Activated B cell treated with CpG ODN at 0.5 μM for 24 hours (primary cell): ENCODE measurements at regions of chr7 and their contacts with region 1.

Region 1: DNA sequence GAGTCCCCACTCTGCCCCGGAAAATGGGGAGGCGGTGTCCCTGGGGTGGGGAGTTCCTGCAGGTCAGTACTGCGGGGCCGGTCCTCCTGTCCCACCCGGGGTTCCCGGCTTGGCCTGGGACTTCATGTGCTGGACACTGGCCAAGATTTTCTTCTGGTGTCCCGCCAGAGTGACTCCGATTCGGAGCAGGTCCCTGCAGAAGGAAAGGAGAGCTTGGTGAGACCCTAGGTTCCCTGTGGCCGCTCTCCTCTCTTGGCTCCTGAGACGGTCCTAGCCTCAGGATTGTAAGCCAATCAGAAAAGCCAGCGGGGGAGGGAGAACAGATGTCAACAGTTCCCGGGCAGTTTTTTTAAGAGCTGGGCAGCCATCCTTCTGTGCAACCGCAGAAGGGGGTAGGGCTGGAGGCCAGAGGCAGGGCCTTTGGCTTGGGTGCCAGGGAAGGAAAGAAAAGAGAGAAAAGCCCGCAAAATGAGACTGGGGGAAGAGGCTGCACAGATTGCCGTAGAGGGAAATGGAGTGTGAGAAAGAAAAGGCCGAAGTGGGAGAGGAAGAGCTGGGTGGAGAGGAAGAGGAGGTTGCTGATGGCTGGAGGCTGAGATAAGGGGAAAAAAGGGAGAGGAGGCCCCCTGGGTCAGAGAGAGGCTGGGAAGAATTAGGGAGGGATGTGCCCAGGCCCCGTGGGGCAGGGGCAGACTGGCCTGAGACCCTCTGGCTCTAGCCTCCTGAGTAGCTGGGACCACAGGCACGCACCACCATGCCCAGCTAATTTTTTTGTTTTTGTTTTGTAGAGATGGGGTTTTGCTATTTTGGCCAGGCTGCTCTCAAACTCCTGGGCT is 23.7 kb downstream of the EPHB4 start:
- DNase-seq: peak; percentile 62
- ATAC-seq: peak; percentile 97
- H3K4me3 Mint-ChIP-seq: peak overlapping the region; percentile 76
- H3K27ac Mint-ChIP-seq: peak overlapping the region; percentile 84
- H3K4me1 Mint-ChIP-seq: peaks cover 36% of the 10 kb centered on the region
- H3K27me3 Mint-ChIP-seq: no peaks in the 10 kb centered on the region
- CTCF ChIP-seq: no peak

Region 2: DNA sequence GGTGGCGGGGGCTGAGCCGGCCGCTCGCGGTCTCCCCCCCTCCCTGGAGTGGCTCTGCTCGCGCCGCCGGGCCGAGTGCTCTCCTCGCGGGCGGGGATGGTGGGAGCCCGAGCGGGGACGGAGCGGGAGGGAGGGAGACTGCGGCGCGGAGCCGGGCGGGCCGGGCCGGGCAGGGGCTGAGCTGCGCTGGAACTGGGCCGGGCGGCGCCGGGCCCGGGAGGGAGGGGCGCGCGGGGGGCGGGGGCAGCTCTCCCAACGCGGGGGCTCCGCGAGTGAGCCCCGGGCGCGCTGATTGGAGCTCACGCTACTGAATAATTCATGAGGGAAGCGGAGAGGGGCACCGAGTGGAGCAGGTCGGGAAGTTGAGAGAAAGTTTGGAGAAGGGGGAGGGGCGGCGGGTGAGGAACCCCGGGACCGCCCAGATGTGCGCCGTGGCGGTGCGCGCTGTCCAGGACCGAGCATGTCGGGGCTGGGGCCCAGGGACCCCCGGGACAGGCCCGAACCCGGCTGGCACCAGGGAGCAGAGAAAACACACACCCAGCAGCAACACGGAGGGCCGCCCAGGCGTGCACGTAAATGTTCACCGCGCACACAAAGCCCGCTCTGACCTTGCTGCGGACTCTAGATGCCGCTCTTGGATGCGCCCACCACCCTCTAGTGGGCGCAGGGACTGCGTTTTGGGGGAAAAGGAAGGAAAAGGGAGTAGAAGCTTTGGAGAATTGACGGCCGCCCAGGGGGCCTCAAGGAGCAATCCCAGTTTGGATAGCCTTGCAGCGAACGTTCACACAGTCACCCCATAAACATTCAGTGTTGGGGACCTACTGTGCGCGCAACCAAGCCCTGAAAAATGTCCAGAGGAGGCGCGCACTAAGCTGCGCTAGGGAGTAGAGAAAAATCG is 24.0 kb after region 1 on chr7 and contains the start of gene EPHB4:
- CTCF ChIA-PET with region 1: no interaction called
- POLR2A ChIA-PET with region 1: interaction called, 11 read pairs
- intact Hi-C with region 1: no loop called
- DNase-seq: no peak
- ATAC-seq: peak; percentile 49
- H3K4me3 Mint-ChIP-seq: peak within 1 kb of the TSS; percentile 71
- H3K27ac Mint-ChIP-seq: no peak within 1 kb of the TSS
- H3K4me1 Mint-ChIP-seq: peaks cover 18% of the 10 kb centered on the region
- H3K27me3 Mint-ChIP-seq: peaks cover 36% of the 10 kb centered on the region
- CTCF ChIP-seq: no peak
- total RNA-seq, gene EPHB4: 2.5 and 4.1 TPM in 2 replicates

Region 3: GRCh38 chr7:100837099-100837836 is 33.7 kb after region 1 on chr7:
- CTCF ChIA-PET with region 1: no interaction called
- POLR2A ChIA-PET with region 1: interaction called, 10 read pairs
- intact Hi-C with region 1: loop called (anchors 1 kb)
- DNase-seq: peak; percentile 67
- ATAC-seq: peak; percentile 97
- H3K4me3 Mint-ChIP-seq: peak overlapping the region; percentile 89
- H3K27ac Mint-ChIP-seq: peak overlapping the region; percentile 85
- H3K4me1 Mint-ChIP-seq: peaks cover 17% of the 10 kb centered on the region
- H3K27me3 Mint-ChIP-seq: no peaks in the 10 kb centered on the region
- CTCF ChIP-seq: no peak

Region 4: DNA sequence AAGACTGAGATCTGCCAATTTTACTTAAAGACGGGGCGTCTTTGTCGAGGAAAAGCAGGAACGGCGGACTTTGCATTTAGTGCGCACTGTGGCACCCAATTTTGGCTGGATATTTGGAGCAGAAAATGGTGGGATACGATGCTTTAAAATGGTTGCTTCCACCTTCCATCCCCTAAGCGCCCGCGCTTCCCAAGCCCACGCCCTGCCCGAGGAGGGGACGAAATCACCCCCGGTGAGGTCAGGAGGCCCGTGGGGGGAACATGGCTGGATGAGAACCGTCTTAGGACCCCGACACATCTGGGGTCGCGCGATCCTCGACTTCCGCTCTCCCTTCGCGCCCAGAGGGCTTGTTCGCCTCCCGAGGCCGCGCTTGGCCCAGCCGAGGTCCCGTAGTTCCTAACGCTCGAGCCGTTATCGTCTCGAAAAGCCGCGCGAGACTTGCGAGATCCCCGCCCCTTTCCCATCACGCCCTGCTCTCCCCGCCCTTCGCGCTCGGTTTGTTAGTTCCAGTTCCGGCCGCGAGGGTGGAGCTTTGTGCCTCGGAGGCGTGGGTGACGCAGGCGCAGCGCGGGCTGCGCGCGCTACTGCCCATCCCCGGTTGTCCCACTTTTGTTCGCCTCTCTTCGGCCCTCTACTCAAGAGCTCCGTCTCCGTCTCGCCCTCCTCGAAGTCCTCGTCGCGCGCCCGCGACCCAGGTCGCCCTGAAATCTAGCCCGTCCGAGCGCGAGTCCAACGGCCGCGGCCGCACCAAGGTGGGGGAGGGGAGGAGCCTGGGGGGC is 71.2 kb after region 1 on chr7 and contains the start of gene SRRT:
- CTCF ChIA-PET with region 1: no interaction called
- POLR2A ChIA-PET with region 1: interaction called, 15 read pairs
- intact Hi-C with region 1: loop called (anchors 2 kb)
- DNase-seq: peak; percentile 96
- ATAC-seq: peak; percentile 96
- H3K4me3 Mint-ChIP-seq: peak within 1 kb of the TSS; percentile 99
- H3K27ac Mint-ChIP-seq: peak within 1 kb of the TSS; percentile 98
- H3K4me1 Mint-ChIP-seq: peaks cover 45% of the 10 kb centered on the region
- H3K27me3 Mint-ChIP-seq: no peaks in the 10 kb centered on the region
- CTCF ChIP-seq: no peak
- total RNA-seq, gene SRRT: 229 and 244 TPM in 2 replicates